Naive thymus-derived CD4-positive, alpha-beta T cell (primary cell): ENCODE measurements at regions of chr6 and their contacts with region 1.

Region 1: DNA sequence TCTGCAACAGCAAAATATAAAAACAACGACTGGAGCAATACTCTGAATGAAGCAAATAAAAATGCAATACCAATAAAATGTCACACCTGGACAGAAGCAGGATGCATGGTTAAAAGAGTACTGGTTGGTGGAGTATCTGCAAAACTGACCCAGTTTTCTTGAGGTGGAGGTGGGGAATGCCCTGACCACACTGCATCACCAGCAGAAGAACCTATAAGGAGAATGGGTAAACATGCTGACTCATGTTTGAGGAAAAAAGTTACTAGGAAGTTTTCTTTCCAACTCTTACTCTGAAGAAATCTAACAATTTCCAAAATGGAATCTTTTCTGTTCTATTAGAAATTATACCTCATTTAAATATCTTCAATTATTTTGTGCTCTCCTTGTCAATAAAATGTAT is 43.6 kb downstream of the REPS1 start:
- DNase-seq: peak in 1 of 9 donors; percentile 35
- ATAC-seq: peak; percentile 64
- H3K4me3 ChIP-seq: no peak overlapping the region
- H3K4me3 Mint-ChIP-seq: no peak overlapping the region
- H3K27ac ChIP-seq: no peak overlapping the region
- H3K27ac Mint-ChIP-seq: no peak overlapping the region
- H3K4me1 ChIP-seq: peaks cover 9 to 10% of the 10 kb centered on the region in 2 donors
- H3K4me1 Mint-ChIP-seq: peaks cover 23 to 46% (median 32%) of the 10 kb centered on the region in 7 donors
- H3K27me3 ChIP-seq: no peaks in the 10 kb centered on the region
- H3K27me3 Mint-ChIP-seq: no peaks in the 10 kb centered on the region

Region 2: GRCh38 chr6:138824482-138825144 is 119.8 kb before region 1 on chr6:
- CTCF ChIA-PET with region 1: no interaction called
- POLR2A ChIA-PET with region 1: no interaction called
- intact Hi-C with region 1: no loop called
- DNase-seq: peak in 7 of 9 donors; percentile 12 to 38 (median 14)
- ATAC-seq: no peak
- H3K4me3 ChIP-seq: no peak overlapping the region
- H3K4me3 Mint-ChIP-seq: peak overlapping the region in 1 of 10 donors; percentile 68
- H3K27ac ChIP-seq: no peak overlapping the region
- H3K27ac Mint-ChIP-seq: peak overlapping the region in 5 of 9 donors; percentile 2 to 71 (median 28)
- H3K4me1 ChIP-seq: peaks cover 0 to 4% of the 10 kb centered on the region in 2 donors
- H3K4me1 Mint-ChIP-seq: peaks cover 0 to 10% (median 7%) of the 10 kb centered on the region in 7 donors
- H3K27me3 ChIP-seq: no peaks in the 10 kb centered on the region
- H3K27me3 Mint-ChIP-seq: no peaks in the 10 kb centered on the region

Region 3: DNA sequence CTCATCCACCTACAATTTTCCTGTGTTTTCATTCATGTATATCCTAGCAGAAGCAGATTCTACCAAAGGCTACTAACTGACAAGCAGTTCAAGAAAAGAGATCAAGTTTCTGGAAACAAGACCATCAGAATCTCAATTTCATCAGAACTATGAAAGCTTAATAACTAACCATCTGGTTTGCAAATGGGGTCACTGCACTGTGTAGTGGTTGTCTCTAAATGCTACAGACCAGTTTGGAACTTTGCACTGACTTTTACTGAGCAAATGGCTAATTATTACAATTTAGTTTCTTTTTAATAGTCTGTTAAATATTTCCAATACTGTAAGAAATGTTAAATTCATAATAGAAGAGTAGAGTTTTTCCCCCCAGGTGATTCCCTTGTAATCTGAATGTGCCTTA is 20.9 kb before region 1 on chr6:
- CTCF ChIA-PET with region 1: no interaction called
- POLR2A ChIA-PET with region 1: no interaction called
- intact Hi-C with region 1: no loop called
- DNase-seq: no peak
- ATAC-seq: no peak
- H3K4me3 ChIP-seq: no peak overlapping the region
- H3K4me3 Mint-ChIP-seq: no peak overlapping the region
- H3K27ac ChIP-seq: no peak overlapping the region
- H3K27ac Mint-ChIP-seq: no peak overlapping the region
- H3K4me1 ChIP-seq: no peaks in the 10 kb centered on the region
- H3K4me1 Mint-ChIP-seq: no peaks in the 10 kb centered on the region
- H3K27me3 ChIP-seq: no peaks in the 10 kb centered on the region
- H3K27me3 Mint-ChIP-seq: no peaks in the 10 kb centered on the region

Region 4: GRCh38 chr6:138965971-138966370 is 21.6 kb after region 1 on chr6:
- CTCF ChIA-PET with region 1: no interaction called
- POLR2A ChIA-PET with region 1: no interaction called
- intact Hi-C with region 1: loop called in 1 of 2 experiments (anchors 2 kb)
- DNase-seq: no peak
- ATAC-seq: no peak
- H3K4me3 ChIP-seq: no peak overlapping the region
- H3K4me3 Mint-ChIP-seq: no peak overlapping the region
- H3K27ac ChIP-seq: no peak overlapping the region
- H3K27ac Mint-ChIP-seq: no peak overlapping the region
- H3K4me1 ChIP-seq: peaks cover 9 to 12% of the 10 kb centered on the region in 2 donors
- H3K4me1 Mint-ChIP-seq: peaks cover 6 to 64% (median 53%) of the 10 kb centered on the region in 7 donors
- H3K27me3 ChIP-seq: no peaks in the 10 kb centered on the region
- H3K27me3 Mint-ChIP-seq: no peaks in the 10 kb centered on the region